ENCODE measurements at regions of chr12 and their contacts with region 1.

Region 1: DNA sequence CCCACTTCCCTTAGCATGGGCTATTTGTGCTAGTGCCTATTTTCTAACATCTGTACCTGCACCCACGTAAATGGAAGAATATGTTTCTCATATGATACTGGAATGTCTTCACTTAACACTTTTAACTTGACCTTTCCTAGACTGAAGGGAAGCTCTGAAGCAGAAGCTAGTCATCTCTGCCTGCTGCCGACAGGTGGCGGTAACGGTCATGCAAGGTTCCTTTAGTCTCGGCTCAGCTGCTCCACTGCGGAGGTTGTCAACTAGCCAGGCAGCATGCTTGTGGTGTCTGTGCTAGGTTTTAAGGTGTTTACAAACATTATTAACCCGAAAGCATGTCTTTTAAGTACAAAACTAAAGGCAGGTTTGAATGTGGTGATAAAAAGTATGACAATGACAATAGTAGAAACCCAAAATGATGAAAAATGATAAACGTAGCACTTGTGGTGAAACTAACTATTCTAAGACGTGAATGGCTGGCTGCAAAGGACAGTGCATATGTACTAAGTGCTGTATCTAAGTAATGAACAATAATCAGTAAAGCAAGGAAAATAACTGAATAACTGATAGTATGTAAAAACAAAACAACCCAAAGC is 117.2 kb downstream of the GRIN2B start:
- DNase-seq: peak; percentile 69
- H3K4me3 Mint-ChIP-seq: no peak overlapping the region
- H3K27ac Mint-ChIP-seq: no peak overlapping the region
- H3K4me1 Mint-ChIP-seq: no peaks in the 10 kb centered on the region
- H3K27me3 Mint-ChIP-seq: peaks cover 7% of the 10 kb centered on the region

Region 2: GRCh38 chr12:13595536-13596443 is 268.4 kb before region 1 on chr12:
- CTCF ChIA-PET with region 1: no interaction called
- DNase-seq: no peak
- H3K4me3 Mint-ChIP-seq: no peak overlapping the region
- H3K27ac Mint-ChIP-seq: no peak overlapping the region
- H3K4me1 Mint-ChIP-seq: peaks cover 20% of the 10 kb centered on the region
- H3K27me3 Mint-ChIP-seq: peaks cover 4% of the 10 kb centered on the region

Region 3: DNA sequence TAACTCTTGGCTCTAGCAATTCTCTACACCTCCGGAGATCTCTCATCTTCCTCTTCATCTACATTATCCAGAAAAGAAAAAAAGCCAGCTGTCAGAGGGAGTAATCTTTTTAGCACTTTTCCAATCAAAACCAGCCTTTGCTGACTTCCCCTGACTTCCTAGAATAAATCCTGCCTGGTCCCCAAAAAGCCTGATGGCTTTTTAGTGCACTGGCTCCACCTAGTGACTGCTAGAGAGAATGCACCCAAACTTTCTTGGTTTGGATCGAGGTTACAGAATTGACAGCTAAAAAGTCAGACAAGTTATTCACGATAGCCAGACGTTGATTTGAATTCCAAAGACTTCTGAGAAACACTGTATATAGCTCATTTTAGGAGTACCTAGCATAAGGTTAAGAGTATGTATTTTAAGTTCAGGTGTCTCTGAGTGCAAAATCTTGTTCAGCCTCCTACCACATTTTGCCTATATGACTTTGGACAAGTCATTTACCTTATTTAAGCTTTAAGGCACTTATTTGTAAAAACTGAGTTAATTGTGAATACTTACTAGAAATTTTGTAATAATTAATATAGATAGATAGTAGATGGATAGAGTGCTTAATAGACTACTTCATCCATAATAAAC is 302.9 kb after region 1 on chr12:
- CTCF ChIA-PET with region 1: interaction called, 16 read pairs
- DNase-seq: peak; percentile 54
- H3K4me3 Mint-ChIP-seq: no peak overlapping the region
- H3K27ac Mint-ChIP-seq: no peak overlapping the region
- H3K4me1 Mint-ChIP-seq: no peaks in the 10 kb centered on the region
- H3K27me3 Mint-ChIP-seq: peaks cover 4% of the 10 kb centered on the region